Activated T-helper 2 cell treated with anti-CD3 and anti-CD28 coated beads, Interferon-gamma antibody, Interleukin-2, Interleukin-4, amounts not matched to agents 10 μg/mL and 5 μg/mL and 100 μg/mL, durations not matched to agents 14 hours and 24 hours and 36 hours (primary cell): ENCODE measurements at regions of chr19 and their contacts with region 1.

Region 1: DNA sequence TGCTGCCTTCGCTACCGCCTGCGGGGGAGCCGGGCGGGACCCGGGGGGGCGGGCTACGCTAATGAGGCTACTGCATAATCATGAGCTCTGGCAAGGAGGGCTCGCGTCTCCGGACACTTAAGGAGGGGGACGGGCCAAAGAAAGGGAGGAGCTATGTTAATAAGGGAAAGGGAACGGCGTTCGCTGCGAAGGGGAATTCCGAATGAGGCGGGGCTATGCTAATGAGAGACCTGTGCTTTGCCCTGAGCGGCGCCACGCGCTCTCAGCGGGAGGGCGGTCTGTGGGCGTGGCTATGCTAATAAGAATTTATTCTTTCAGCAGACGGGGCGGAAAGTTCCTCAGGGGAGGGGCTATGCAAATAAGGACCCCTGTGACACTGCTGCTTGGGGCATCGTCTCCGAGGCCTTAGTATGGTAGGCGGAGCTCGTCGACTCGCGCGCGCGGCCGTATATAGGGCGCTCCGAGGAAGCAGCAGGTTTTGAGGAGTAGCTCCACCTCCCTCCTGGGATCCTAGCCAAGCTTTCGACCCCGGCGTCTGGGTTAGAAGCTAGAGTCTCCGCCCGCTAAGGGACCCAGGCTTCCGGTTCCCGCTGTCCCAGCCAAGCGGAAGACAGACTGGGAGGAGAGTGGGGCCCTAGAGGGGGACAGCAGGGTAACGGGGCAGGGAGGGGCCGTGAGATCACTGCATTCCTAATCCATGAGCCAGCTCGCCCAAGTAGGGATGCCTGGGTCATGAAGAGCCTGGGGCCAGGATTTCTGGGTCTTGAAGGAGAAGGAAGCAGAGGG is at the start of gene RRAS:
- DNase-seq: peak; percentile 100
- H3K4me3 Mint-ChIP-seq: peak within 1 kb of the TSS; percentile 91
- H3K27ac Mint-ChIP-seq: peak within 1 kb of the TSS; percentile 97
- H3K4me1 Mint-ChIP-seq: peaks cover 47% of the 10 kb centered on the region
- H3K27me3 Mint-ChIP-seq: peaks cover 1% of the 10 kb centered on the region
- total RNA-seq, gene RRAS: 4.9 and 6.2 TPM in 2 replicates

Region 2: GRCh38 chr19:49560358-49560900 is 79.9 kb before region 1 on chr19:
- intact Hi-C with region 1: no loop called
- DNase-seq: no peak
- H3K4me3 Mint-ChIP-seq: peak overlapping the region; percentile 74
- H3K27ac Mint-ChIP-seq: peak overlapping the region; percentile 92
- H3K4me1 Mint-ChIP-seq: peaks cover 66% of the 10 kb centered on the region
- H3K27me3 Mint-ChIP-seq: no peaks in the 10 kb centered on the region

Region 3: GRCh38 chr19:49590071-49590970 is 50.0 kb before region 1 on chr19:
- intact Hi-C with region 1: loop called (anchors 1 kb)
- DNase-seq: peak; percentile 94
- H3K4me3 Mint-ChIP-seq: peak overlapping the region; percentile 83
- H3K27ac Mint-ChIP-seq: peak overlapping the region; percentile 82
- H3K4me1 Mint-ChIP-seq: peaks cover 22% of the 10 kb centered on the region
- H3K27me3 Mint-ChIP-seq: peaks cover 7% of the 10 kb centered on the region

Region 4: GRCh38 chr19:49665351-49666119 is 25.2 kb after region 1 on chr19 and contains the starts of genes BCL2L12 and IRF3:
- intact Hi-C with region 1: loop called (anchors 1 kb)
- DNase-seq: peak; percentile 98
- H3K4me3 Mint-ChIP-seq: peak within 1 kb of the TSS; percentile 95
- H3K27ac Mint-ChIP-seq: peak within 1 kb of the TSS; percentile 87
- H3K4me1 Mint-ChIP-seq: peaks cover 20% of the 10 kb centered on the region
- H3K27me3 Mint-ChIP-seq: no peaks in the 10 kb centered on the region
- total RNA-seq, gene BCL2L12: 66.2 and 72.7 TPM in 2 replicates
- total RNA-seq, gene IRF3: 135 and 147 TPM in 2 replicates

Region 5: GRCh38 chr19:49676690-49677231 is 36.5 kb after region 1 on chr19:
- intact Hi-C with region 1: loop called (anchors 1 kb)
- DNase-seq: peak; percentile 99
- H3K4me3 Mint-ChIP-seq: peak overlapping the region; percentile 98
- H3K27ac Mint-ChIP-seq: peak overlapping the region; percentile 96
- H3K4me1 Mint-ChIP-seq: peaks cover 23% of the 10 kb centered on the region
- H3K27me3 Mint-ChIP-seq: no peaks in the 10 kb centered on the region

Region 6: DNA sequence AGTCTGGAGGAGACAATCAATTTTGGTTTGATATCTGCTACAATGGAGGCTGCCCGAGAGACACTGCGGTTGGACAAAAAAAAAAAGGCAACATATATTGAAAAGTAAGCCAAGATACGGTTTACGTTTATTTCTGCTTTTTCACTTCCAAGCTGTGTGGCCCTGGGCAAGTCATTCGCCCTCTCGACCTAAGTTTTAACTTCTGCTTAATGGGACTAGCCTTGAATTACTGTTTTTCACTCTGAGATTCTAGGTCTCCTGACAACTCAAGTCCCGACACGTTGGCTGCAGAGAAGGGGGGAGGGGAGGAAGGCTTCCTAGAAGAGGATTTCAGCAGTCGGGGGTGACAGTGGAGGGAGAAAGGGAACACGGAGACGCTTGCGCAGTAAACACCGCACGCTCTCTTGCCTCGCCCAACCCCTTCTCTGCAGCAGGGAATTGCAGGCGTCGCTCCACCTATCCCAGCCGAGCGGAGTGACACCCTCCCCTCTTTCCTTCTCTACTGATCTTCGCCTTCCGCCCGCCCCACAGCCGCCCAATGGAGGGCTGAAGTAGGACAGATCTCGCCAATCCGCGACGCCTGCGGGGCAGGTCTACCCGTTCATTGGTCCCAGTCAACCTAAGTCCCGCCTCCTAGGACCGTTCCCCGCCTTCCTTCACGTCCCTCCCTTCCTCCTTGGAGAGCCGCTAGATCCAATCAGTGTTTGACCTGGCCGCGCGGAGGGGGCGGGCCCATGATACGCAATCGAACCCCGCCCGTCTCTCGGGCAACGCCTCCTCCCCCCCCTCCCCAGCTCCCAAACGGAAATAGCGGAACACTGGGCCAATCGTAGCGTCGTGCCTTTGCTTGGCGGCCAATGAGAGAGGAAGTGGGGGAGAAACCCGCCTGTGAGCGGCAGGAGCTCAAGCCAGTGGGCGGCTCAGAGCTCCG is 126.0 kb after region 1 on chr19:
- intact Hi-C with region 1: loop called (anchors 1 kb)
- DNase-seq: peak; percentile 99
- H3K4me3 Mint-ChIP-seq: peak overlapping the region; percentile 91
- H3K27ac Mint-ChIP-seq: peak overlapping the region; percentile 89
- H3K4me1 Mint-ChIP-seq: peaks cover 18% of the 10 kb centered on the region
- H3K27me3 Mint-ChIP-seq: no peaks in the 10 kb centered on the region

Region 7: DNA sequence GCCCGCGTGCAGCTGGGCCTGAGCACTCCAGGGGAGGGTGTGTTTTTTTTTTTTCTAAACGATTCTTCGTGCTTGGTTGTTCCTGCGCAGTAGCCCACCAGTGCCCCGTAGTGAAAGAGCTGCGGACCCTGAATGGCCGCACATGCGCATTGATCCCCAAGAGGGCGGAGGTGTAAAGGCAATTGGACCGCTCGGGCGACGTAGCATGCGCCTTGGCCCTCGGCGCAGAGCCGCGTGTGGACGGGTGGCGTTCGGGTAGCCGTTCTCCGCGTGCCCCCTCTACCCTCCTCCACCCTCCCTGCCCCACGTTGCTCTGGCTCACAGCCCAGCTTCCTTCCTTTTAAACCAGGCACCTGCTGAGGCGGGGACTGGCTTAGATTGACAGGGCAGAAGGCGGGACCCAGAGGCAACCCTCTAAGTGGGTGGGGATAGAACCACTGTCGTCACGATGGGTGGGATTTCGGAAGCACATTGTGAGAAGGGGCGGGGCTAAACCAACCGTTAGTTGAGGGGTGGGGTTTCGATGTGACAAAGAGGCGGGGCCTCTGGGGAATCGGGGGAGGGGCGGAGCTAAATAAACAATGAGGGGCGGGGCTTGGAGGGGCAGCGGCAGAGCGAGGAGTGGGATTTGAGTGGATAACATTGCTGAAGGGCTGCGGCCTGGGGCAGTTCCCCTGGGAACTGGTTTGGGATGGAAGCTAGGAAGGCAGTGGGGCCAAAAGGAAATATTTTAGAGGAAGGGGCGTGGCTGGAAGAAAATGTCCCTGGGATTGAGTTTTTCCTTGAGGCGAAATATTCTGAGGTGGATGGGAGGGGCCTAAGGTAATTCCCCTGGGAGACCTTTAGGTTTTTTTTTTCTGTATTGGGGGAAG is 289.5 kb after region 1 on chr19:
- intact Hi-C with region 1: loop called (anchors 2 kb)
- DNase-seq: peak; percentile 92
- H3K4me3 Mint-ChIP-seq: peak overlapping the region; percentile 98
- H3K27ac Mint-ChIP-seq: peak overlapping the region; percentile 98
- H3K4me1 Mint-ChIP-seq: peaks cover 36% of the 10 kb centered on the region
- H3K27me3 Mint-ChIP-seq: no peaks in the 10 kb centered on the region

Region 8: GRCh38 chr19:50025024-50025789 is 384.9 kb after region 1 on chr19 and contains the start of gene VRK3:
- intact Hi-C with region 1: loop called (anchors 1 kb)
- DNase-seq: peak; percentile 98
- H3K4me3 Mint-ChIP-seq: peak within 1 kb of the TSS; percentile 91
- H3K27ac Mint-ChIP-seq: peak within 1 kb of the TSS; percentile 96
- H3K4me1 Mint-ChIP-seq: peaks cover 32% of the 10 kb centered on the region
- H3K27me3 Mint-ChIP-seq: no peaks in the 10 kb centered on the region
- total RNA-seq, gene VRK3: 60.8 and 67.7 TPM in 2 replicates